Transverse colon (tissue), 4 donors: ENCODE measurements at regions of chr17 and their contacts with region 1.

Region 1: DNA sequence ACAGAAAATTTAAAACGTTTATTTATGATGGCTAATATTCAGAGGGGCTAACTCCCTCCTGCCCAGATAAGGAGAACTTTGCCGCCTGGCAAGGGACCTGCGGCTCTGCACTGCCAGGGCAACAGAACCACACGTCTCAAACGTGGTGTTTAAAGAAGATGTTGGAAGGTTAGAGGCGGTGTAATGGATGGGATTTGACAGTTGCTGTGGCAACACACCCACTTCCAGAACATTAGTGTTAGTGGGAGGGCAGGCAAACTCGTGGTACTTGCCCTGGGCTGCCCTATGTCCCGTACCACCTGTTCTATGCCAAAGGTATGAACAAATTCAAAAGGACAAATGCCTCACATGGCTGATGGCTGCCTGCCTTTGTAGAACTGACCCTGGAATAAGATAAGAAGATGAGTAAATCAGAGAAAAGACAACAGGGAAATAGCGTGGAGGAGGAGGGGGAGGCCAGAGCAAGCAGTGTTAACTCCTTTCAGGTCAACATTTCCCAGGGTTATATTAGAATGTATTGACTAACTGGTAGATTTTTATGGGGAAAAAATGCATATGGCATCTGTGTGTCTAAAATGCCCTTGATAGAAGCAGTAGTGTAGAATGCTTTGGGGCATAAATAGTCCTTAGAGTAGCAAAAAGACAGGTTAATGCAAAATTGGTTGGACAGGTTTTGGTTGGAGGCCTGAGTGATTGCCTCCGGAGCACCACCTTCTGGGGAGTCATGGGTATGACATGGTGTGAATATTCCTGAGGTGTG is 30.8 kb downstream of the HLF start:
- DNase-seq: peak; percentile 66
- H3K4me3 ChIP-seq: no peak overlapping the region
- H3K27ac ChIP-seq: no peak overlapping the region
- H3K4me1 ChIP-seq: peaks cover 0 to 11% (median 0%) of the 10 kb centered on the region in 4 donors
- H3K27me3 ChIP-seq: no peaks in the 10 kb centered on the region
- CTCF ChIP-seq: peak; percentile 83 to 90 (median 84)
- EP300 ChIP-seq: no peak
- POLR2A ChIP-seq: no peak

Region 2: GRCh38 chr17:55264645-55265298 is 30.8 kb before region 1 on chr17 and contains the start of gene HLF:
- in situ Hi-C with region 1: no loop called
- intact Hi-C with region 1: loop called (anchors 5 kb)
- DNase-seq: peak; percentile 81
- H3K4me3 ChIP-seq: peak within 1 kb of the TSS; percentile 30 to 62 (median 42)
- H3K27ac ChIP-seq: peak within 1 kb of the TSS; percentile 76 to 86 (median 81)
- H3K4me1 ChIP-seq: peaks cover 8 to 30% (median 21%) of the 10 kb centered on the region in 4 donors
- H3K27me3 ChIP-seq: peaks cover 64% of the 10 kb centered on the region
- CTCF ChIP-seq: no peak
- EP300 ChIP-seq: no peak
- POLR2A ChIP-seq: no peak
- total RNA-seq, gene HLF: 8.5 to 17.5 (median 13.3) TPM

Region 3: GRCh38 chr17:55323518-55324295 is 28.1 kb after region 1 on chr17:
- in situ Hi-C with region 1: no loop called
- intact Hi-C with region 1: loop called (anchors 1 kb)
- DNase-seq: no peak
- H3K4me3 ChIP-seq: no peak overlapping the region
- H3K27ac ChIP-seq: no peak overlapping the region
- H3K4me1 ChIP-seq: no peaks in the 10 kb centered on the region
- H3K27me3 ChIP-seq: no peaks in the 10 kb centered on the region
- CTCF ChIP-seq: no peak
- EP300 ChIP-seq: no peak
- POLR2A ChIP-seq: no peak